Motor neuron (in vitro differentiated cells): ENCODE measurements at regions of chr15 and their contacts with region 1.

Region 1: DNA sequence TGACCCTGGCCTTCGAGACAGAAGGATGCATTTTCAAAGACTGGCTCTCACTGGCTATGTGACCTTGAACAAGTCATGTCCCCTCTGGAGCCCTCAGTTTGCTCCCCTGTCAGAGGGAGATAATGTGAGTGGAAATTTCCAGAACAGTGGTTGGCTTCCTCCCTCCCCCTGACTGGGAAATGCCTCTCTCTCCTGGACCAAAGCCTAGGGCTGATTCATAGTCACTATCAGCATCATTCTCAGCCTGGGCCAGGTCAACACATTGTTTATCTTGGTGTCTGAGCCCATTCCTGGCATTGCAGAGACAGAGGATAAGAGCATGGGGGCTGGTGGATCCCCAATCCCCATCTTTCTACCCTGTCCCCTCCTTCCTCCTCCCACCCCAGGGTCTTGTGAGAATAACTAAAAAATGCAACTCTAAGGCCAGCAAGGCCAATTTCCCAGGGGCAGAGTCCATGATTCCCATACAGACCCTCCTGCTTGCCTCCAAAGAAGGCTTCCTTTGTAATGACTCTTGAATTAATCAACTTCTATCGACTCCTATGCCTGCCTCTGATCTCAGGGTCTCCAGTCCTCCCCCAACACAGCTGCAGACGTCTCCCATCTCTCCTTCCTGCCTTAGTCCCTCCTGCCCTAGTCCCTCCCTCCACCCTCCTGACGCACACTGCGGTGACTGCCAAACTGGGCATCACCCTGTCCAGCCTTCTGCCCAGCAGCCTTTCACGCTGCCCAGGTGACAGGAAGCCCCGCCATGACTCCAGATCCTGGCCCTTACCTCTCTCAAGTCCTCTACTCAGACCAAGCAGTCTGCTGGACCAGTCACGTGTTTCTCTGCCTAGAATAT is 35.4 kb upstream of the CORO2B start:
- ATAC-seq: peak in 3 of 8 experiments; percentile 27 to 75 (median 70)
- H3K4me3 ChIP-seq: no peak overlapping the region
- H3K27ac ChIP-seq: no peak overlapping the region
- H3K4me1 ChIP-seq: no peaks in the 10 kb centered on the region

Region 2: DNA sequence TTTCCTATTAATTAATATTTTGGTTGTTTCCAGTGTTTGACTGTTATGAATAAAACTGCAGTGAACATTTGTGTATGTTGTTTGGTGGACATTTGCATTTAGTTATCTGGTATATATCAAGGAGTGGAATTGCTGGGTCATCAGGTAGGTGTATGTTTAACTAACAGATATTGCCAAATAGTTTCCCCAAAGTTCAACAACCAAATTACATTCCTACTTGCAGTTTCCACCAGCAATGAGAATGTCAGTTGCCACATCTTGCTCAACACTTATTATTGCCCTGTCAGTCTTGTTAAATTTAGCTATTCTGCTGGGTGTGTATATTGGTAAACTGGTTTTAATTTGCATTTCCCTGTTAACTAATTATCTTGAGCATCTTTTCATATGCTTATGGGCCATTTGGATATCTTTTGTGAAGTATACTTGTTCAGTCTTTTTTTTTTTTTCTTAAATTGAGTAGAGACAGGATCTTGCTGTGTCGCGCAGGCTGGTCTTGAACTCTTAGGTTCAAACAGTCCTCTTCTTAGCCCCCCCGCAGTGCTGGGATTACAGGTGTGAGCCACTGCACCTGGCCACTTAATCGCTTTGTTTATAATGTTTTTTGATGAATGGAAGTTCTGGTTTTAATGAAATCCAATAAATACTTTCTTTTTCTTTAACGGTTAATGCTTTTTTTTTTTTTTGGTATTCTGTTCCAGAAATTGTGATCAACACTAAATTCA is 258.0 kb before region 1 on chr15:
- in situ Hi-C with region 1: no loop called
- ATAC-seq: no peak
- H3K4me3 ChIP-seq: no peak overlapping the region
- H3K27ac ChIP-seq: no peak overlapping the region
- H3K4me1 ChIP-seq: peaks cover 0 to 25% of the 10 kb centered on the region in 2 donors

Region 3: DNA sequence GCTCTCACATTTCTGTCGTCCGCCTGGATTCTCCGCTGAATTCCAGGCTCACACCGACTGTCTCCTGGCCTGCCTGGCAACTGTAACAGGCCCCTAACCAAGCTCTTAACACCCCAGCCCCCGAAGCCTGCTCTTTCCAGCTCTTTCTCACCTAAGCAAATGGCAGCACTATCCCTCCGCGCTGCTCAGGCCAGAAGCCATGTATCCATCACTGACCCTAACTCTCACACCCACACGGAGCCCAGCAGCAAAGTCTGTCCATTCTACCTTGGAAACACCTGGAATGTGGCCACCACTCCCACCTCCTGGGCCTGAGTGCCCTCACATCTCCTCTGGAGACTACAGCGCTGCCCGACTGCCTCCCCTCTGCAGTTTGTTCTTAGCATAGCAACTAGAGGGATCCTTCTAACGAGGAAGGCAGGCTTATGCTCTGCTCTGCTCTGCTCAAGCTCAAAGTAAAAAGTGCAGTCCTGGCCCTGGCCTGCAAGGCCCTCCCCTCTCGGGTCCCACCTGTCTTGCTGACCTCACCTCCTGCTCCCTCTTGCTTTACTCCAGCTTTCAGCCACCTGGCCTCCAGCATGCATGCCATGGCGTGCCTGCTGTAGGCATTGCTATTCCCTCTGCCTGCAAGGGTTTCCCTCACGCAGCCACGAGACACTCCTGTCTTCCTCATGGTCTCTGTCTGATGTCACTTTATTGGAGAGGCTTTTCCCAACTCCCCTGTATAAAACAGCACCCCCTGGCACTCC is 238.6 kb before region 1 on chr15:
- in situ Hi-C with region 1: loop called in 3 of 9 experiments (anchors 10 to 25 kb)
- ATAC-seq: peak in 4 of 8 experiments; percentile 15 to 79 (median 45)
- H3K4me3 ChIP-seq: no peak overlapping the region
- H3K27ac ChIP-seq: peak overlapping the region in 1 of 2 donors; percentile 12
- H3K4me1 ChIP-seq: peaks cover 3 to 17% of the 10 kb centered on the region in 2 donors

Region 4: DNA sequence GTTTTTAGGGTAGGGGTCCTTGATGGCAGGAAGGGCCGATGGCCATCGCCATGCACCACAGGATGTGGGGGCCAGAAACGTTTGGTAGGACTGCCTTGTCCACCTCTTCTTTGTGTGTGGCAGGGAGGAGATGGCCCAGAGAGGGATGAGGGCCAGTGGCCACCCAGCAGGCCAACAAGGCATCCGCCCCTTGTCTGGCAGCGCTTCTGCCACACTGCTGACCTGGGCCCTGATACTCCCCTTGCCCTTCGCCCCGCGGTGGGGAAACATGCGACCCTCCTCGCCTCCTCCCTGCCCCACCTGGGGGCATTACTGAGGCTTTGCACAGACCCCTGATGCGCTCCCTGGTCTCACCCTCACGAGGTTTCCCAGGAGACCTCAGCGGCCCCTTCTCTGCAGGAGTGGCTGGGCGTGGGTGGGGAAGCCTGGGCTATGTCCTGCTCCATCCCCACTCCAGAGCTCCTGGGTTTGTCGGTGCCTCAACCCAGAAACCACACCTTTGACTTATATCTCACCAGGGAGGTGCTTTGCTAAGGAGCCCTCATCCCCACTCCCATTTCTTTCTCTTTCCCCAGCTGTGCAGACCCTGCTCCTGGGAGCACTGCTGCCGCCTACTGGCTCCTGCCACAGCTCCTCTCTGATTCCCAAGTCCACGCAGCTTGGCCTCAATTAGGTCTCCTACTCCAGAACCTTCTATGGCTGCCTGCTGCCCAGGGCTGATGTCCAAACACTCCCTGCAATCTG is 227.2 kb before region 1 on chr15:
- in situ Hi-C with region 1: loop called in 2 of 9 experiments (anchors 25 kb)
- ATAC-seq: peak in 6 of 8 experiments; percentile 37 to 55 (median 51)
- H3K4me3 ChIP-seq: no peak overlapping the region
- H3K27ac ChIP-seq: no peak overlapping the region
- H3K4me1 ChIP-seq: peaks cover 0 to 8% of the 10 kb centered on the region in 2 donors